ENCODE measurements at regions of chr22 and their contacts with region 1.

Region 1: DNA sequence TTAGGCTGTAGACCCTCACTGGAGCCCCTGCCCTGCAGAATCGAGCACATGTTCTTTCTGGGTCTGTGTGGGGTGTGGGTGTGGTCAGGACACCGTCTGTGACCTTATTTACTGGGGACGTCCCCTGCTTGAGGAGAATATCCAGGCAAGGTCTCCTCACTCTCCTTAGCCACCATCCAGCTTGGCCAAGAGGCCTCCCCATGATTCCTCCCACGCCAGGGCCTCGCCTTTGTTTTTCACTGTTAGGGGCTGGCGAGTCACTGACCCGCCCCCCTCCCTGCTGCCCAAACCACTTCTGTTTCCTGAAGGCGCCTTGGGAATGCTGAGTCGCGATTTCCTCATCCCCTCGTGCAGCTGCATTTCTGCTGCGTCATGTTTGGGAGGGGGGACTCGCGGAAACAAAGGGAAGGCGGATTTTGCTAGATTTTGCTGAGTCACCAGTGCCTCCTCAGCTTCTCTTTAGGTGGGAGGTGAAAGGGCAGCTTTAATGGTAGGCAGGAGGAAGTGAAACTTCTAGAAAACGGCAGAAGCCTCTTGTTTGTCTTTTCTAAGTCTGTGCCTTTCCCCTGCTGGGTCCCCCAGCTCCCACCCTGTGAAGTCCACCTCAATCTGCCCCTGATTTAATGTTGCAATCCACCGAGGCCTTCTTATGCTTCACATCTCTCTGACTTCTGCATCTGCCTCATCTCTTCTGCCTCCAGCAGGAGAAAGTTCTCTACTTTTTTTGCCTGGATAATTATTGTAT is 4.0 kb upstream of the HMOX1 start:
- DNase-seq: peak; percentile 98 to 100 (median 100)
- H3K4me3 ChIP-seq: peak overlapping the region in 1 of 3 experiments; percentile 66
- H3K4me3 Mint-ChIP-seq: peak overlapping the region; percentile 47 to 86
- H3K27ac ChIP-seq: peak overlapping the region; percentile 74 to 84
- H3K27ac Mint-ChIP-seq: peak overlapping the region; percentile 92 to 97 (median 96)
- H3K4me1 ChIP-seq: peaks cover 74 to 85% of the 10 kb centered on the region in 2 donors
- H3K4me1 Mint-ChIP-seq: peaks cover 68% of the 10 kb centered on the region
- H3K27me3 ChIP-seq: no peaks in the 10 kb centered on the region
- H3K27me3 Mint-ChIP-seq: peaks cover 0 to 3% (median under 1%) of the 10 kb centered on the region in 3 donors
- CTCF ChIP-seq: no peak

Region 2: GRCh38 chr22:35330258-35330861 is 46.5 kb before region 1 on chr22:
- intact Hi-C with region 1: loop called in 1 of 2 experiments (anchors 1 kb)
- DNase-seq: peak; percentile 91 to 95 (median 95)
- H3K4me3 ChIP-seq: peak overlapping the region in 1 of 3 experiments; percentile 31
- H3K4me3 Mint-ChIP-seq: peak overlapping the region; percentile 56 to 71
- H3K27ac ChIP-seq: peak overlapping the region; percentile 92 to 97
- H3K27ac Mint-ChIP-seq: peak overlapping the region; percentile 98 to 100 (median 99)
- H3K4me1 ChIP-seq: peaks cover 49 to 50% of the 10 kb centered on the region in 2 donors
- H3K4me1 Mint-ChIP-seq: peaks cover 62% of the 10 kb centered on the region
- H3K27me3 ChIP-seq: no peaks in the 10 kb centered on the region
- H3K27me3 Mint-ChIP-seq: peaks cover 0 to 2% (median 1%) of the 10 kb centered on the region in 3 donors
- CTCF ChIP-seq: no peak

Region 3: DNA sequence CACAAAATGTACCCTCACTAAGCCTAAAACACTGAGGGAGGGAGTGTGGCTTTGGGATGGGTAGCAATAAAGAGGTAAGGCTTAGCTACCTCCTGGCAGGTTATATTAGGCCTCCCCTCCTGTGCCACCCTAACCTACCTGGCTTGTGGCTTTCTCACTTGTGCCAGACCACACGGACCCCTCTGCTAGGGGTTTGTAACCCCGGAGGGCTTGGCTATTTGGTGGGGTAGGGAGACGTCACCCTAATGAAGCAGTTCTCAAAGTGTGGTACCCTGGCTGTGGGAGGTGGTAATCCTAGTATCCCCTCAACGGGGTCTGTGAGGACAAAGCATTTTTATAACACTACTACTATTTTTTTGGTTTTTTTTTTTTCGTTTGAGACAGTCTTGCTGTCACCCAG is 14.0 kb after region 1 on chr22:
- intact Hi-C with region 1: no loop called
- DNase-seq: no peak
- H3K4me3 ChIP-seq: no peak overlapping the region
- H3K4me3 Mint-ChIP-seq: no peak overlapping the region
- H3K27ac ChIP-seq: no peak overlapping the region
- H3K27ac Mint-ChIP-seq: no peak overlapping the region
- H3K4me1 ChIP-seq: peaks cover 0 to 3% of the 10 kb centered on the region in 2 donors
- H3K4me1 Mint-ChIP-seq: peaks cover 11% of the 10 kb centered on the region
- H3K27me3 ChIP-seq: no peaks in the 10 kb centered on the region
- H3K27me3 Mint-ChIP-seq: peaks cover 1 to 6% (median 1%) of the 10 kb centered on the region in 3 donors
- CTCF ChIP-seq: no peak

Region 4: DNA sequence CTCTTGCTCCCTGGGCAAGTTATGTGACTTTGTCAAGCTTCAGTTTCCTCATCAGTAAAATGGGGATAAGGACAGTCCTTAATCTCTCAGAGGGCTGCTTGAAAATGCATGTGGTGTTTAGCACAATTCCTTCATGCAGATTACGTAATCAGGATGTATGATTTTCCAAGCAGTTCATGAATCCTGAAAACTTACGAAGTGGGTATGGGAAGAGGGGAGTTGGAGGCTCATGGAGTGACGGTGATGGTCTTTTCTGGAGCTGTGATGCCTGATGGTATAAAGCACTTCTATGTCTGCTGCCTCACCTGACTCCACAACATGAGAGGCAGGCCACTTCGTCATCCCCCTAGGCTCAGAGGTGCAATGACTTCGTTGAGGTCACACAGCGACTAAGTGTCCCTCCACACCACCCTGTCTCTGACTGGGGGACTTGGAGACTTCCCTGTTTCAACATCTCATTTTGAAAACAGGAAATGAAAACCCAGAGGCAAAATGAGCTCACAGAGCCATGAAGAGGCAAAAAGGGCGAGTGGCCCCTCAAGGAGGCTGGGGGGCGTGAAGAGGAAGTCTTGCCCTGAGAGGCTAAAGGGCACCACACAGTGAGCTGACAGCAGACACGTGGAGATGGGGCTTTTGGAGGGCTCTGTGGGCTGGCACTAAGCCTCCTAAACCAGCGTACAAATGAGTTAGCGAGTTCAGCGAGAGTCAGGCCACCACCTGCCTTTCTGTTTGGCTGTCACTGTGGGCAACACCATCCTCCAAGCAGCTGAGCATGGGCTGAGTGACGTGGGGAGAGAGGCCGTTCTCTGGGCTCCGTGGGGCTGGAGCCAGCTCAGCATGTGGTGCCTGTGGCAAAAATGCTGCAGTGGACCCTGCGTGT is 33.1 kb after region 1 on chr22:
- intact Hi-C with region 1: loop called in 1 of 2 experiments (anchors 5 kb)
- DNase-seq: peak; percentile 94 to 98 (median 97)
- H3K4me3 ChIP-seq: peak overlapping the region in 1 of 3 experiments; percentile 49
- H3K4me3 Mint-ChIP-seq: peak overlapping the region; percentile 45 to 67
- H3K27ac ChIP-seq: peak overlapping the region; percentile 92
- H3K27ac Mint-ChIP-seq: peak overlapping the region; percentile 97 to 100 (median 98)
- H3K4me1 ChIP-seq: peaks cover 53 to 54% of the 10 kb centered on the region in 2 donors
- H3K4me1 Mint-ChIP-seq: peaks cover 56% of the 10 kb centered on the region
- H3K27me3 ChIP-seq: no peaks in the 10 kb centered on the region
- H3K27me3 Mint-ChIP-seq: peaks cover 0 to 2% (median 0%) of the 10 kb centered on the region in 3 donors
- CTCF ChIP-seq: no peak

Measured in CD14-positive monocyte (primary cell).